Panc1 (cell line): ENCODE measurements at regions of chr10 and their contacts with region 1.

Region 1: DNA sequence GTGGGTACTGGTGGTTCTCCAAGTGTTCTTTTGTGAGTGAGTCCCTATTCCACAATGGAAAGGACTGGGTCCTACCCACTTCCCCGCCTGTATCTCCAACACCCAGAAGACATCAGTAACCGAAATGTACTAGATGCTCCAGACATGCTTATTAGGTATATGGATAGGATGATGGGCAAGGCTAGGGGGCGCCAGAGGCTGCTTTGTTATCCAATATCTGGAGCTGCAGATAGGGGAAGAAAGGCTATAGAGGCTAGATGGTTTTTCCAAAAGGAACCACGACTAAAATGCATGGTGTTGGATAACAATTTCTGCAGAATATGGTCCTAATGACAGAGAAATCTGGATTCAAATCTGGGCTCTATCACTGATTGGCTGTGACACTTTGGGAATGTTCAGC is 56.2 kb upstream of the TM9SF3 start:
- DNase-seq: peak; percentile 28
- ATAC-seq: peak; percentile 79
- H3K4me3 ChIP-seq: no peak overlapping the region
- H3K27ac ChIP-seq: no peak overlapping the region
- H3K4me1 ChIP-seq: no peaks in the 10 kb centered on the region
- H3K27me3 ChIP-seq: no peaks in the 10 kb centered on the region
- CTCF ChIP-seq: peak; percentile 78

Region 2: GRCh38 chr10:96374985-96375830 is 267.8 kb before region 1 on chr10:
- CTCF ChIA-PET with region 1: interaction called, 4 read pairs
- POLR2A ChIA-PET with region 1: no interaction called
- in situ Hi-C with region 1: no loop called
- intact Hi-C with region 1: loop called (anchors 10 kb)
- DNase-seq: peak; percentile 89
- ATAC-seq: peak; percentile 91
- H3K4me3 ChIP-seq: peak overlapping the region; percentile 53 to 82
- H3K27ac ChIP-seq: peak overlapping the region; percentile 73
- H3K4me1 ChIP-seq: peaks cover 8% of the 10 kb centered on the region
- H3K27me3 ChIP-seq: 0 out of 2 replicates have a peak, but pooled peaks cover 2% of the 10 kb centered on the region
- CTCF ChIP-seq: peak; percentile 99

Region 3: DNA sequence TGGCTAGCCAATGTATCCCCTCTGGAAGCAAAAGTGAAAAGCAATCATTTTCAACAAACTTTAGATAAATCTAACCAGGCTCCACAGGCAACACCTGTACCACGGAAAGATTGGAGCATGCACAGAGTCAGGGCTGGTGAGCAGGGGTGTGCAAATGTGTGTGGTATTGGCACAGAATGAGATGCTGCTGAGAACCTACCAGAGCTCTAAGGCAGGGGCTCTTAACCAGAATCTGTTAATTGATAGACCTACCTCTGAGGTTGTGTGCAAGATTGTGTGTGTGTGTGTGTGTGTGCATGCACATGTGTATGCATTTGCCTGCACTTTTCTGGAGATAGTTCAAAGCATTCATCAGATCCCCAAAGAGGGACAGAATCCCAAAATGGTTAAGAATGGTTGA is 14.4 kb after region 1 on chr10:
- CTCF ChIA-PET with region 1: no interaction called
- POLR2A ChIA-PET with region 1: no interaction called
- in situ Hi-C with region 1: no loop called
- intact Hi-C with region 1: no loop called
- DNase-seq: no peak
- ATAC-seq: no peak
- H3K4me3 ChIP-seq: no peak overlapping the region
- H3K27ac ChIP-seq: no peak overlapping the region
- H3K4me1 ChIP-seq: no peaks in the 10 kb centered on the region
- H3K27me3 ChIP-seq: no peaks in the 10 kb centered on the region
- CTCF ChIP-seq: no peak

Region 4: GRCh38 chr10:96690755-96691731 is 48.1 kb after region 1 on chr10:
- CTCF ChIA-PET with region 1: no interaction called
- POLR2A ChIA-PET with region 1: no interaction called
- in situ Hi-C with region 1: no loop called
- intact Hi-C with region 1: no loop called
- DNase-seq: no peak
- ATAC-seq: no peak
- H3K4me3 ChIP-seq: no peak overlapping the region
- H3K27ac ChIP-seq: no peak overlapping the region
- H3K4me1 ChIP-seq: no peaks in the 10 kb centered on the region
- H3K27me3 ChIP-seq: no peaks in the 10 kb centered on the region
- CTCF ChIP-seq: no peak

Region 5: GRCh38 chr10:96719850-96720421 is 77.0 kb after region 1 on chr10:
- CTCF ChIA-PET with region 1: interaction called, 3 read pairs
- POLR2A ChIA-PET with region 1: no interaction called
- in situ Hi-C with region 1: no loop called
- intact Hi-C with region 1: loop called (anchors 5 kb)
- DNase-seq: no peak
- ATAC-seq: peak; percentile 87
- H3K4me3 ChIP-seq: peak overlapping the region; percentile 50 to 57
- H3K27ac ChIP-seq: peak overlapping the region; percentile 29; the same call in 1 of the 2 replicates
- H3K4me1 ChIP-seq: peaks cover 4% of the 10 kb centered on the region
- H3K27me3 ChIP-seq: peaks cover 12% of the 10 kb centered on the region; the same call in 1 of the 2 replicates
- CTCF ChIP-seq: peak; percentile 83

Region 6: GRCh38 chr10:96831867-96832720 is 189.1 kb after region 1 on chr10 and contains the start of gene LCOR:
- CTCF ChIA-PET with region 1: interaction called, 11 read pairs
- POLR2A ChIA-PET with region 1: interaction called, 4 read pairs
- in situ Hi-C with region 1: no loop called
- intact Hi-C with region 1: loop called (anchors 2 kb)
- DNase-seq: no peak
- ATAC-seq: peak; percentile 89
- H3K4me3 ChIP-seq: peak within 1 kb of the TSS; percentile 76 to 91
- H3K27ac ChIP-seq: peak within 1 kb of the TSS; percentile 98
- H3K4me1 ChIP-seq: peaks cover 37% of the 10 kb centered on the region
- H3K27me3 ChIP-seq: no peaks in the 10 kb centered on the region
- CTCF ChIP-seq: no peak
- total RNA-seq, gene LCOR: 58.0 TPM